CD8-positive, alpha-beta T cell (primary cell): ENCODE measurements at regions of chr2 and their contacts with region 1.

Region 1: DNA sequence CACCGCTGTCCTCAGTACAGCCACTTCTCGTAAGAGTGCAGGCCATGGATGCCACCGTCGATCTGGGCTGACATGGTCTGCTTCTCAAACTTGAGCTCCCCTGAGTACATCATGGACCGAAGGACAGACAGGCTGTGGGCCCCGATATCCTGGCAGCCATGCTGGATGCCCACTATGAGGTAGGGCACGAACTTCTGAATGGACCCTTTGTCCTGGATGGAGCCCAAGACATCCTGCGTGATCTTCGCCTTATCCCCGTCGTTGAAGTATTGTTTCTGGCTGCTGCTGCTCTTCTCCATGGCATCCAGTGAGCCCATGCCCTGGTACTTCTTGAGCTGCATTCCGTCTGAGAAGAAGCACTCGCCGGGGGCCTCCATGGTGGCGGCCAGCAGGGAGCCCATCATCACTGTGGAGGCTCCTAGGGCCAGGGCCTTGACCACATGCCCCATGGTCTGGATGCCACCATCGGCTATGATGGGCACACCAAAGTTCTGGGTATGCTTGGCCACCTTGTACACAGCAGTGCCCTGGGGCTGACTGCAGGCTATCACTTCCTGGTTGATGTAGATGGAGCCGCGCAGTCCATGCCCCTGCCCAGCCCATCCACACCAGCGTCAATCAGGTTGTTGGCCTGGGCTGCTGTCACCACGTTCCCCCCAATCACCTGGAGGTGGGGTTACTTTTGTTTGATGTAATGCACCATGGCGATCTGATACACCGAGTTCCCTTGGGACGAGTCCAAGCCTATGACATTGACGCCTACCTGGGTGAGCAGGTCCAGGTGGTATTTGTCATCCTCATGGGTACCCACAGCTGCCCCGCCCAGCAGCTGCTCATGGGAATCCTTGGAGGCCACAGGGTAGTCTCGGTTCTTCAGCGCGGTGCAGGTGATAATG is 21.8 kb downstream of the CFLAR start:
- DNase-seq: no peak
- ATAC-seq: no peak
- H3K4me3 ChIP-seq: no peak overlapping the region
- H3K4me3 Mint-ChIP-seq: no peak overlapping the region
- H3K27ac ChIP-seq: no peak overlapping the region
- H3K27ac Mint-ChIP-seq: no peak overlapping the region
- H3K4me1 ChIP-seq: peaks cover 6% of the 10 kb centered on the region
- H3K4me1 Mint-ChIP-seq: peaks cover 27% of the 10 kb centered on the region
- H3K27me3 ChIP-seq: no peaks in the 10 kb centered on the region
- H3K27me3 Mint-ChIP-seq: no peaks in the 10 kb centered on the region
- CTCF ChIP-seq: no peak

Region 2: GRCh38 chr2:201151127-201151981 is 13.6 kb after region 1 on chr2:
- CTCF ChIA-PET with region 1: no interaction called
- POLR2A ChIA-PET with region 1: no interaction called
- intact Hi-C with region 1: loop called in 1 of 2 experiments (anchors 1 kb)
- DNase-seq: peak in 1 of 9 experiments; percentile 37
- ATAC-seq: no peak
- H3K4me3 ChIP-seq: no peak overlapping the region
- H3K4me3 Mint-ChIP-seq: no peak overlapping the region
- H3K27ac ChIP-seq: peak overlapping the region in 1 of 2 experiments; percentile 79
- H3K27ac Mint-ChIP-seq: peak overlapping the region; percentile 76
- H3K4me1 ChIP-seq: no peaks in the 10 kb centered on the region
- H3K4me1 Mint-ChIP-seq: peaks cover 25% of the 10 kb centered on the region
- H3K27me3 ChIP-seq: no peaks in the 10 kb centered on the region
- H3K27me3 Mint-ChIP-seq: no peaks in the 10 kb centered on the region
- CTCF ChIP-seq: no peak

Region 3: DNA sequence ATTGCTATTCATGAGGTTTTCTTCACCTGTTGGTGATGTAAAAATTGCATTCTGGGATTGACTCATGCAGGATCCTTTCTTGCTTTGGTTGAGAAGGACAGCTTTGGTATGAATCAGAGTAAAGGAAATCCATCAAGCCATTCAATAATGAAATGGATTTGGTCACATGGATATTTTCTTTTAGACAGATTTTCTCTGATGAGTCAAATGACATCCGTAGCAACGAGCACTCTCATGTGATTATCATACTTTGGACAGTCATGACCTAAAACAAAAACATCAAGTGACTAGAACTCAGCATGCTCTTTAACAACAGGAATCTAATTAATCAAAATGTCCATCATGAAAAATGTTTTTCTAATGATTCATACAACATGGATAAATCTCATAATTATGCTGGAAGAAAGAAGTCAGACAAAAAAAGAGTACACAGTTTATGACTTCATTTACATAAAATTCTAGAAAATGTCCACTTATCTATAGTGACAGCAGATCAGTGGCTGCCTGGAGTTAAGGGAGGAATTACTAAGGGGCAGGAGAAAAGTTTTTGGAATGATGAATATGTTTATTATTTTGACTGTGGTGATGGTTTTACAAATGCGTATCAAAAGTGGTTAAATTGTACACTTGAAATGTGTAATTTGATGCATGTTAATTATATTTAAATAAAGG is 282.8 kb after region 1 on chr2:
- CTCF ChIA-PET with region 1: no interaction called
- POLR2A ChIA-PET with region 1: no interaction called
- intact Hi-C with region 1: no loop called
- DNase-seq: no peak
- ATAC-seq: no peak
- H3K4me3 ChIP-seq: no peak overlapping the region
- H3K4me3 Mint-ChIP-seq: no peak overlapping the region
- H3K27ac ChIP-seq: peak overlapping the region in 1 of 2 experiments; percentile 12
- H3K27ac Mint-ChIP-seq: peak overlapping the region; percentile 91
- H3K4me1 ChIP-seq: peaks cover 31% of the 10 kb centered on the region
- H3K4me1 Mint-ChIP-seq: peaks cover 55% of the 10 kb centered on the region
- H3K27me3 ChIP-seq: no peaks in the 10 kb centered on the region
- H3K27me3 Mint-ChIP-seq: no peaks in the 10 kb centered on the region
- CTCF ChIP-seq: no peak